ENCODE measurements at regions of chr6 and their contacts with region 1.

Region 1: GRCh38 chr6:17599885-17600526 is at the start of gene FAM8A1:
- DNase-seq: peak; percentile 90 to 99 (median 96)
- ATAC-seq: peak; percentile 86
- H3K4me3 ChIP-seq: peak within 1 kb of the TSS; percentile 62 to 78
- H3K4me3 Mint-ChIP-seq: peak within 1 kb of the TSS; percentile 88
- H3K27ac ChIP-seq: peak within 1 kb of the TSS; percentile 82 to 91
- H3K27ac Mint-ChIP-seq: peak within 1 kb of the TSS; percentile 94
- H3K4me1 ChIP-seq: peaks cover 32% of the 10 kb centered on the region
- H3K4me1 Mint-ChIP-seq: peaks cover 46% of the 10 kb centered on the region
- H3K27me3 ChIP-seq: no peaks in the 10 kb centered on the region
- H3K27me3 Mint-ChIP-seq: no peaks in the 10 kb centered on the region
- CTCF ChIP-seq: peak; percentile 41
- total RNA-seq, gene FAM8A1: 17.6 to 17.8 TPM

Region 2: DNA sequence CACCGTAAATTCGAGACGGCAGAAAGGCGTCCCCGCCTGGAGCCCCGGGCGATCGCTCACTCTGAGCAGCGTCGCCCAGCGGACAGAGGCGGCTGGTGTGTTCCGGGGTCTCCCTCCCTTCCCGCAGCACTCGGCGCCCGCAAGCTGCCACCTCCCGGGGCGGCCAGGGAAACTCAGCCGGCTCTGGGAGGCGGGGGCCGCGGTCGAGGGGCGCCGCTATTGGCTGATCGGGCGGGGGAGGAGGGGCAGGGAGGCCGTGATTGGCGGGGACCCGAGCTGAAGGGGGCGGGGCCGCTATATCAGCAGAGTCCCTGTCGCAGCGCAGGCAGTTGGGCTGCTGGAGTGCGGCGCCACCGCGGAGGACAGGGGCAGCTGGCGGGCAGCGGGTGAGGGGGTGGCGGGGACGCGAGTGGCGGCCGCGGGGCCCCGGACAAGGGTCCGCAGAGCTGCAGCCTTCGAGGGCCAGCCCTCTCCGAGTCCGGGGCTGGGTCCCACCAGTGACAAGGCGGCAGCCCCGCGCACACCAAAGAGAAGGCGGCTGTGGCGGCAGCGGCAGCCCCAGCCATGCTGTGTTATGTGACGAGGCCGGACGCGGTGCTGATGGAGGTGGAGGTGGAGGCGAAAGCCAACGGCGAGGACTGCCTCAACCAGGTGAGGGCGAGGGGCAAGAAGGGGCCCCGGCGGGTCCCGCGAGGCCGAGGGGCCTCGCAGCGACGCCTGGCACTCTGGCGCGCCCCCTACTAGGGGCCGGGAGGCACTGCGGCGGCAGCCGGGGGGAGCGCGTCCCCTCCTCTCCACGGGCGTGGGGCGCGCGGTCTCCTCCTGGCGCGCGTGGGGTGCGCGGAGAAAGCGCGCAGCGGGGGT is 1471.0 kb before region 1 on chr6 and contains the start of gene MYLIP:
- CTCF ChIA-PET with region 1: no interaction called
- POLR2A ChIA-PET with region 1: no interaction called
- intact Hi-C with region 1: loop called in 1 of 2 experiments (anchors 5 kb)
- DNase-seq: peak; percentile 96 to 99 (median 97)
- ATAC-seq: peak; percentile 81
- H3K4me3 ChIP-seq: peak within 1 kb of the TSS; percentile 75 to 96
- H3K4me3 Mint-ChIP-seq: peak within 1 kb of the TSS; percentile 96
- H3K27ac ChIP-seq: peak within 1 kb of the TSS; percentile 90 to 94
- H3K27ac Mint-ChIP-seq: peak within 1 kb of the TSS; percentile 96
- H3K4me1 ChIP-seq: peaks cover 29% of the 10 kb centered on the region
- H3K4me1 Mint-ChIP-seq: peaks cover 33% of the 10 kb centered on the region
- H3K27me3 ChIP-seq: peaks cover 0 to 2% of the 10 kb centered on the region in 2 experiments
- H3K27me3 Mint-ChIP-seq: no peaks in the 10 kb centered on the region
- CTCF ChIP-seq: peak; percentile 61
- total RNA-seq, gene MYLIP: 225 to 231 TPM

Region 3: GRCh38 chr6:17385426-17386059 is 214.5 kb before region 1 on chr6:
- CTCF ChIA-PET with region 1: no interaction called
- POLR2A ChIA-PET with region 1: no interaction called
- intact Hi-C with region 1: no loop called
- DNase-seq: no peak
- ATAC-seq: no peak
- H3K4me3 ChIP-seq: no peak overlapping the region
- H3K4me3 Mint-ChIP-seq: no peak overlapping the region
- H3K27ac ChIP-seq: no peak overlapping the region
- H3K27ac Mint-ChIP-seq: no peak overlapping the region
- H3K4me1 ChIP-seq: no peaks in the 10 kb centered on the region
- H3K4me1 Mint-ChIP-seq: no peaks in the 10 kb centered on the region
- H3K27me3 ChIP-seq: peaks cover 0 to 5% of the 10 kb centered on the region in 2 experiments
- H3K27me3 Mint-ChIP-seq: peaks cover 26% of the 10 kb centered on the region
- CTCF ChIP-seq: no peak

Region 4: GRCh38 chr6:17584241-17584803 is 15.7 kb before region 1 on chr6:
- CTCF ChIA-PET with region 1: interaction called, 32 read pairs
- POLR2A ChIA-PET with region 1: interaction called, 24 read pairs
- intact Hi-C with region 1: loop called (anchors 1 to 2 kb)
- DNase-seq: peak in 3 of 9 experiments; percentile 17 to 67 (median 53)
- ATAC-seq: peak; percentile 67
- H3K4me3 ChIP-seq: no peak overlapping the region
- H3K4me3 Mint-ChIP-seq: peak overlapping the region; percentile 17
- H3K27ac ChIP-seq: no peak overlapping the region
- H3K27ac Mint-ChIP-seq: no peak overlapping the region
- H3K4me1 ChIP-seq: peaks cover 5% of the 10 kb centered on the region
- H3K4me1 Mint-ChIP-seq: peaks cover 10% of the 10 kb centered on the region
- H3K27me3 ChIP-seq: peaks cover 0 to 5% of the 10 kb centered on the region in 2 experiments
- H3K27me3 Mint-ChIP-seq: peaks cover 6% of the 10 kb centered on the region
- CTCF ChIP-seq: peak; percentile 89

Region 5: GRCh38 chr6:17621003-17621402 is 21.0 kb after region 1 on chr6:
- CTCF ChIA-PET with region 1: interaction called, 6 read pairs
- POLR2A ChIA-PET with region 1: interaction called, 14 read pairs
- intact Hi-C with region 1: no loop called
- DNase-seq: no peak
- ATAC-seq: no peak
- H3K4me3 ChIP-seq: no peak overlapping the region
- H3K4me3 Mint-ChIP-seq: no peak overlapping the region
- H3K27ac ChIP-seq: no peak overlapping the region
- H3K27ac Mint-ChIP-seq: no peak overlapping the region
- H3K4me1 ChIP-seq: no peaks in the 10 kb centered on the region
- H3K4me1 Mint-ChIP-seq: peaks cover 26% of the 10 kb centered on the region
- H3K27me3 ChIP-seq: no peaks in the 10 kb centered on the region
- H3K27me3 Mint-ChIP-seq: no peaks in the 10 kb centered on the region
- CTCF ChIP-seq: no peak

Region 6: GRCh38 chr6:17700421-17701416 is 100.7 kb after region 1 on chr6:
- CTCF ChIA-PET with region 1: interaction called, 18 read pairs
- POLR2A ChIA-PET with region 1: interaction called, 47 read pairs
- intact Hi-C with region 1: loop called in 1 of 2 experiments (anchors 1 kb)
- DNase-seq: no peak
- ATAC-seq: no peak
- H3K4me3 ChIP-seq: no peak overlapping the region
- H3K4me3 Mint-ChIP-seq: no peak overlapping the region
- H3K27ac ChIP-seq: peak overlapping the region in 1 of 2 experiments; percentile 3
- H3K27ac Mint-ChIP-seq: peak overlapping the region; percentile 74
- H3K4me1 ChIP-seq: peaks cover 34% of the 10 kb centered on the region
- H3K4me1 Mint-ChIP-seq: peaks cover 62% of the 10 kb centered on the region
- H3K27me3 ChIP-seq: no peaks in the 10 kb centered on the region
- H3K27me3 Mint-ChIP-seq: no peaks in the 10 kb centered on the region
- CTCF ChIP-seq: no peak

Region 7: DNA sequence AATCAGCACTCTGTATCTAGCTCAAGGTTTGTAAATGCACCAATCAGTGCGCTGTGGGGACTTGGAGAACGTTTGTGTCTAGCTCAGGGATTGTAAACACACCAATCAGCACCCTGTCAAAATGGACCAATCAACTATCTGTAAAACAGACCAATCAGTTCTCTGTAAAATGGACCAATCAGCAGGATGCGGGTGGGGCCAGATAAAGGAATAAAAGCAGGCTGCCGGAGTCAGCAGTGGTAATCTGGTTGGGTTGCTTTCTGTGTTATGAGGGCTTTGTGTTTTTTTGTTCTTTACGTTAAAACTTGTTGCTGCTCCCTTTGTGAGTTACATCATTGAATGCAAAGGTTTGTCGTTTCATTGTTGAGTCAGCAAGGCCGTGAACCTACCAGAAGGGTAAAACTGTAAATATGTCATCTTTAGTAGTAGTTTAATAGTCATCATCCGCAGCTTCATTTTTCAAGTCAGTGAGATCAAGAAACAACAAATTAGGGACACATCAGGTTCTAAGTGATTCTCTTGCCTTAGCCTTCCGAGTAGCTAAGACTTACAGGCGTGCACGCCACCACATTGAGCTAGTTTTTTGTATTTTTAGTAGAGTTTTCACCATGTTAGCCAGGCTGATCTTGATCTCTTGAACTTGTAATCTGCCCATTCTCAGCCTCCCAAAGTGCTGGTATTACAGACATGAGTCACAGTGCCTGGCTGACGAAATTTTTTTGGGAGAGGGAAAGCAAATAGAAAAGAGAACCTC is 129.5 kb after region 1 on chr6:
- CTCF ChIA-PET with region 1: no interaction called
- POLR2A ChIA-PET with region 1: no interaction called
- intact Hi-C with region 1: no loop called
- DNase-seq: no peak
- ATAC-seq: no peak
- H3K4me3 ChIP-seq: no peak overlapping the region
- H3K4me3 Mint-ChIP-seq: no peak overlapping the region
- H3K27ac ChIP-seq: no peak overlapping the region
- H3K27ac Mint-ChIP-seq: no peak overlapping the region
- H3K4me1 ChIP-seq: no peaks in the 10 kb centered on the region
- H3K4me1 Mint-ChIP-seq: no peaks in the 10 kb centered on the region
- H3K27me3 ChIP-seq: no peaks in the 10 kb centered on the region
- H3K27me3 Mint-ChIP-seq: peaks cover 3% of the 10 kb centered on the region
- CTCF ChIP-seq: no peak

Region 8: DNA sequence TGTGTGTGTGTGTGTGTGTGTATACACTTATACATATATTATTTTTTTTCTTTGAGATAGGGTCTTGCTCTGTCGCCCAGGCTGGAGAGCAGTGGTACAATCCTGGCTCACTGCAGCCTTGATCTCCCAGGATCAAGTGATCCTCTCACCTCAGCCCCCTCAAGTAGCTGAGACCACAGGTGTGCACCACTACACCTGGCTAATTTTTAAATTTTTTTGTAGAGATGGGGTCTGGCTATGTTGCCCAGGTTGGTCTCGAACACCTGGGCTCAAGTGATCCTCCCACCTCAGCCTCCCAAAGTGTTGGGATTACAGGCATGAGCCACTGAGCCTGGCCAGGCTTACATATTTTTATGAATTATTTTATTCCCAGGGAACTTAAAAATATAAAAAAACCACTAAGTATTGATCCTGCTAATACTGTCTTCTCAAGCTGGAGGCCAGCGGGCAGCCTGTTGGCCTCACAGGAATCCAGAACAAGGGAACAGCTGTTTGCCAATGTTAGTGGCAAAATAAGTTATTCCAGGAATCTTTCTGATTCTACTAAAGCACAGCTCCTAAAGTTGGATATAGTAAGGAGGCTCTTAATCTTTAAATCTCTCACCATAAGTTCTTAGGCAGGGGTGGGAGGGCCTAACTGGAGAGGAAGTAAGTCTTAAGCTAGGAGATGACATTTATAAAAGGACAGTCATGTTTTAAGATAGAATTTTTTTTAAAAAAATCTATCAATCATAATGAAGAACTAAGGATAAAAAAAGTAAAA is 242.2 kb after region 1 on chr6:
- CTCF ChIA-PET with region 1: no interaction called
- POLR2A ChIA-PET with region 1: no interaction called
- intact Hi-C with region 1: no loop called
- DNase-seq: no peak
- ATAC-seq: no peak
- H3K4me3 ChIP-seq: no peak overlapping the region
- H3K4me3 Mint-ChIP-seq: no peak overlapping the region
- H3K27ac ChIP-seq: no peak overlapping the region
- H3K27ac Mint-ChIP-seq: no peak overlapping the region
- H3K4me1 ChIP-seq: no peaks in the 10 kb centered on the region
- H3K4me1 Mint-ChIP-seq: no peaks in the 10 kb centered on the region
- H3K27me3 ChIP-seq: no peaks in the 10 kb centered on the region
- H3K27me3 Mint-ChIP-seq: no peaks in the 10 kb centered on the region
- CTCF ChIP-seq: no peak

Region 9: DNA sequence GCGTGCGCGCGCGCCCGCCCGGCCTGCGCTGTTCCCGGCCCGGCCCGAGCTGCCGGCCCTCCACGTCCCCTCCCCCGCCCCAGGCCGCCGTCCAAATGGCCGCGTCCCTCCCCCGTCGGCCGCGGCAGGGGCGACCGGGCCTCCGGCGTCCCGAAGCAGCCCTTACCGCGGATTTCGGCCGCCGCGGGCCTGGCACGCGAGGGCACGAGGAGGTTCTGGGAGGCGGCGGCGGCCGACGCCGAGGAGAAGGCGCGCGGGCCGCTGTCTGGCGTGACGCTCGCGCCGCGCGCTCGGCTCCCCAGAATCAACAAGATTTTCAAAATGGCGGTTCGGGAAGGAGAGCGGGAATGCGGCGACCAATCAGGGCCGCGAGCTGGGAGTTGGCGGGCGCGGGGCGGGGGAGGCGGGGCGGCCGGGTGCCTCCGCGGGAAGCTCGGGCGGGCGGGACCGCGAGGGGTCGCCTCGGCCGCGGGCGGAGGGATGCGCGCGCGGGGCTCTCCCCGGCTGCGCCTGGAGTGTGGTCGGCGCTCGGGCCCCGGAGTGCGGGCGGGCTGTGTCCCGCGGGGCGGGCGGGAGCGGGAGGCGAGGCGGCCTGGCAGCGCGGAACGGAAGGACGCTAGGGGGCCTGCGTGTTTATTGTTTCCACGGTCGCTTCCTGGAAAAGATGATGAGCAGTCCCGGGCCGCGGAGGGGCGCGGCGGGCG is 664.4 kb after region 1 on chr6 and contains the start of gene DEK:
- CTCF ChIA-PET with region 1: no interaction called
- POLR2A ChIA-PET with region 1: no interaction called
- intact Hi-C with region 1: loop called (anchors 5 kb)
- DNase-seq: peak; percentile 59 to 90 (median 84)
- ATAC-seq: peak; percentile 66
- H3K4me3 ChIP-seq: peak within 1 kb of the TSS; percentile 67 to 79
- H3K4me3 Mint-ChIP-seq: peak within 1 kb of the TSS; percentile 90
- H3K27ac ChIP-seq: peak within 1 kb of the TSS; percentile 53 to 89
- H3K27ac Mint-ChIP-seq: peak within 1 kb of the TSS; percentile 95
- H3K4me1 ChIP-seq: peaks cover 33% of the 10 kb centered on the region
- H3K4me1 Mint-ChIP-seq: peaks cover 52% of the 10 kb centered on the region
- H3K27me3 ChIP-seq: no peaks in the 10 kb centered on the region
- H3K27me3 Mint-ChIP-seq: no peaks in the 10 kb centered on the region
- CTCF ChIP-seq: peak; percentile 45
- total RNA-seq, gene DEK: 39.5 to 47.5 TPM